ENCODE measurements at regions of chr10 and their contacts with region 1.

Region 1: GRCh38 chr10:73358331-73359279 is at the start of gene CFAP70:
- DNase-seq: peak; percentile 93
- H3K4me3 ChIP-seq: peak within 1 kb of the TSS; percentile 66
- CTCF ChIP-seq: no peak

Region 2: DNA sequence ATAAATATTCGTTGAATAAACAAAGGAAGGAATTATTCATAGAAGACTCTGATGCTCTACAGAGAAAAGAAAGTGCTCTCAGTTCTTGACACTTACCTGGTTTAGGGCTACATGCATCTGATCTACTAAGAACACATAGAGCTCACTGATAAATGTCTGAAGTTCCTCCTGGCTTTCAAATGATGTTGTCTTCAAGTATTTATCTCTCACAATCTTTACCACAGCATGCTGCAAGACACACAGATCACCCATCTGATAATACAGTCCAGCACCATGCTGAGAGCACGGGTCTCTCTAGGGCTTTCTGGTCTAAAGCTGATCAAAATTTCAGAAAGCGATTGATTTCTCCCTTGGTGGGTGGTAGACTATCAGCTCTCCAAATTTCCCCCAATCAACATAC is 61.7 kb before region 1 on chr10:
- in situ Hi-C with region 1: loop called (anchors 5 kb)
- DNase-seq: no peak
- H3K4me3 ChIP-seq: no peak overlapping the region
- CTCF ChIP-seq: no peak

Region 3: DNA sequence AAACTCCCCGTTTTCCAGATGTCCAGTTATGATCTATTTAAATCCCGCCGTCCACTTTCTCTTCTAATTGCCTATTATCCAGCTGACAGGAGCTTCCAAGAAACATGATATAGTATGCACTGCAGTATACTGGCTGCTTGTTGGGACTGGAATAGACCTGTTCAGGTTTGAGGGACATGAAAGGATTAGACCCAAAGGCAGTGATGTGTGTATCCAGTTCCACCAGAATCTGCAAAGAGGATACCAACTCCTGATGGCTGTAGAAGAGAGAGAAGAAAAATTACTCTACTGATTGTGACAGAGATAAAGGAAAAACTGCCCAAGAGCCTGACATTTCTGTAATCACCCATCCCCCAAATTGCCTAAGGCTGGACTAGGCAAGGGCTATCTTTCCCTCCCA is 65.9 kb after region 1 on chr10:
- in situ Hi-C with region 1: no loop called
- DNase-seq: no peak
- H3K4me3 ChIP-seq: no peak overlapping the region
- CTCF ChIP-seq: no peak